Cardiac septum (tissue), 1 donor: ENCODE measurements at regions of chr18 and their contacts with region 1.

Region 1: DNA sequence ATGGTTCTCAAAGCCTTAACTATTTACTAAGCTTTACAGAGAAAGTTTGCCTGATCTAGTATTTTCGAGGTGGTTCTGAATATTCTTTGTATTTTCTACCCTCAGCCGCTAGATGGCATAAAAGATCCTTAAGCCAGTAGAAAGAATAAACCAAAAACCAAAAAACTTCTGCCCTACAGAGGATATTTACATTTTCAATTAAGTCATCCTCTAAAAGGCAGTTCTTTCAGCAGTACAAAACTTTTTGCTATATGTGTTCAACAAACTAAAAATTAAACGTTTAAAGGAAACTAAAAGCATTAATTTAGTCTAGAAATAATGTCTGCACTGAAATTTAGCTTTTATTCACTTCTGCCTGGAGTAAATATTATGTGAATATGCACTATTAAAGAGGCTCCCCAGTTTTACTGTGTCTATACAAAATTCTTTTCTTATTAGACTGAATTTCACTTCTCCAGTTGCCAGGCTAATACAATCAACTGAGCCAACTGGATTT is 297.5 kb downstream of the PIEZO2 start:
- DNase-seq: no peak

Region 2: GRCh38 chr18:11042247-11042646 is 190.4 kb after region 1 on chr18:
- intact Hi-C with region 1: loop called (anchors 2 kb)
- DNase-seq: no peak

Region 3: GRCh38 chr18:11149441-11150270 is 297.8 kb after region 1 on chr18 and contains the start of gene PIEZO2:
- intact Hi-C with region 1: loop called (anchors 5 kb)
- DNase-seq: no peak
- total RNA-seq, gene PIEZO2: 0.46 TPM

Region 4: DNA sequence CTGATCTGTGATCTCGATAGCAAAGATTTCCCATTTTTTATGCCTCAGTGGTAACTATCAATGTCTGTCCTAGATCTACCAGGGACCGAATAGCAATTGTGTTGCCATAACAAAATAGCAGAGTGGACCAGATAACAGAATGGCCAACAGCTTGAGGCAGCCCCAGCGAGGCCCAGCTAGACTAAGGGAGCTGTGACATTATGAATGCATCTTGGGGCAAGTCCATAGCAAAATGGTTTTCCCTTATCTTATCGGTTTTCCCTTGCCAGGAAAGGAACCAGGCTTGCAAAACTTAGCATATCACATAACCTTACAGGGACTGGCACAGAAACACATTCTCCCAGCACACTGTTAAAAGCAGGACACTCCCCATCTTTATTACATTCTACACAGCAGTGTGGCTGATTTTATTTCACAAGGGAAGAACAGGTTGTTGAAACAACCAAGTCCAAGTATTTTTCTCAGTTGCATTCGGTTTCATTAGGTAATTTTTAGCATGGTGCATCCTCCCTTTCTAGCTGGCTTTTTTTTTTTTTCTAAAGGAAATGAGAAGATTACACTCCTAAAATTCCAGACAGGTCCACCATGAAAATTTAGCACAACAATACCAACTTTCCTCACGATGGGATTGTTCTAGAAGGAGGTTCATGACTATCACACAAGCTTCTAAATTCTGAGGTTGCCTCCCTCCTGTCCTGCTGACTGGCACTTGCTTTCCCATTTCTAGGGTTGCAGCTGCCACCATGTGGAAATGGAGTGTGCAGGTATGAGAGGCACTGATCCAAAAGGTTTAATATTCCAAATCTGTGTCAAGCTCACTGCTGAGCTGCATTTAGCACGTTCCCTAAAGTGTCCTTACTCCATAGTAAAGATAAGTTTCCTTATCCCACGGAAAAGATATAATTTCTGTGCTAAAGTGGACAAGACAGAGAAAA is 660.5 kb after region 1 on chr18:
- intact Hi-C with region 1: loop called (anchors 5 kb)
- DNase-seq: no peak